ENCODE measurements at regions of chr5 and their contacts with region 1.

Region 1: GRCh38 chr5:148267972-148268371 is 622 bp upstream of the SPINK13 start:
- DNase-seq: no peak
- H3K4me3 ChIP-seq: no peak overlapping the region
- H3K27me3 ChIP-seq: no peaks in the 10 kb centered on the region
- CTCF ChIP-seq: no peak

Region 2: DNA sequence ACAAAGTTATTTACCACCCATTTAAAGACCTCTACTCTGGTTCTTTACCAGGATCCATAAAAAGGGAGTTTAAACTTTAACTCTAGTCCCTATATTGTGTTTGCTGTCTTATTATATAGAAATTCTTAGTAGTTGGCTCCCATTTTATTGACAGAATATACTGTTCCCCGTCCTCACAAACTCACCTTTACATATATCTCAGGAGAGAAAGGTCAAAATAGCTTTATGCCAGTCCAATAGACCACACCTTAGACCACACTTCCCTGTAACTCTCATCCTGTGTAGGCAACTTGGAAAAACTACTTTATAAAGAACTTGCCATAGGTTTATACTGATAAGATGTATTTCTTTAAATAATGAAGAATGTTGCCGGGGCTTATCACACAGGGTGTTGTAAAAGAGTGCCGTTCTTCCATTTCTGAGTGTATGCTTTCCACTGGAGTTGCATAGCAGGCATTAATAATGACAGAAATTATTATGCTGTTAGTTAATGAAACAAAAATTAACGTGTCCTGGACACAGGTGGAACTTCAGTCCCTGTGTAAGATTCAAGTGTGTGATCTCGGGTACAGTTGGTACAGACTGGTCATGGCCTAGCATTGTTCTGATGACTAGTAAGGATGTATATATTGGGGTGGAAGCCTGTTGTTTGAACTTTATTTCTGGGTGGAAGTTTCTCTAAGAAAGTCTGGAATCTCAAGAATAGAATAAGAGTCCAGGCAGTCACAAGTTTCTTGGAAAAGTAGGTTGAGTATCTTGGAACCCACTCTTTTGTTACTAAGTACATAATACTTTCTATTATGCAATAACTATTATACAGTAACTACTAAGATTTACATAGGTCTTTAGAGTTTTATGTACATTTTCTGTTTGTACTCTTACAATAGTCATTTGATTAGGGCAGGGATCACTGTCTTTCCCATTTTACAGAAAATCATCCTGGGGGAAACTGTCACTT is 132.6 kb before region 1 on chr5:
- CTCF ChIA-PET with region 1: no interaction called
- POLR2A ChIA-PET with region 1: no interaction called
- DNase-seq: no peak
- H3K4me3 ChIP-seq: no peak overlapping the region
- H3K27me3 ChIP-seq: no peaks in the 10 kb centered on the region
- CTCF ChIP-seq: no peak

Region 3: DNA sequence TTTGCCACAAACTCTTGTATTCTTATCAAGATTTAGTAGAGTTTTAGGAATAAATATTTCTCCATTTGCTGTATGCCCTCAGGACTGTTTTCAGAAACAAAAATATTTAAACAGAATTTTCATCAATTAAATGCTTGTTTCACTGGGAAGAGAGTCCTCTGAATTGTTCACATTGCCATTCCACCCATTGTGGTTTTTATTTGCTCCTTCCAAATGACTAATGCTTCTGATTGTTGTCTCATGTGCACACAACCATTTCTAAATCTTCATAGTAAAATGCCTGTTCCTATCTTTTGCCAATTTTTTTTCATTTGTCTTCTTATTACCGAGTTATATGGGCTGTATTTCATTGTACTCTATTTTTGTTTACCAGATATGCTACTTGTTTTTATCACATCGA is 19.1 kb before region 1 on chr5:
- CTCF ChIA-PET with region 1: no interaction called
- POLR2A ChIA-PET with region 1: interaction called, 11 read pairs
- DNase-seq: no peak
- H3K4me3 ChIP-seq: no peak overlapping the region
- H3K27me3 ChIP-seq: no peaks in the 10 kb centered on the region
- CTCF ChIP-seq: no peak

Region 4: GRCh38 chr5:148416921-148417320 is 148.9 kb after region 1 on chr5:
- CTCF ChIA-PET with region 1: no interaction called
- POLR2A ChIA-PET with region 1: no interaction called
- DNase-seq: no peak
- H3K4me3 ChIP-seq: no peak overlapping the region
- H3K27me3 ChIP-seq: no peaks in the 10 kb centered on the region
- CTCF ChIP-seq: no peak

Region 5: GRCh38 chr5:148443998-148444397 is 176.0 kb after region 1 on chr5:
- CTCF ChIA-PET with region 1: no interaction called
- POLR2A ChIA-PET with region 1: no interaction called
- DNase-seq: peak; percentile 11
- H3K4me3 ChIP-seq: no peak overlapping the region
- H3K27me3 ChIP-seq: no peaks in the 10 kb centered on the region
- CTCF ChIP-seq: peak; percentile 71